Esophagus squamous epithelium (tissue), 5 donors: ENCODE measurements at regions of chr14 and their contacts with region 1.

Region 1: GRCh38 chr14:76386915-76387782 is 11.2 kb downstream of the ESRRB start:
- DNase-seq: no peak
- H3K4me3 ChIP-seq: no peak overlapping the region
- H3K27ac ChIP-seq: no peak overlapping the region
- H3K4me1 ChIP-seq: no peaks in the 10 kb centered on the region
- H3K27me3 ChIP-seq: peaks cover 0 to 74% (median 1%) of the 10 kb centered on the region in 4 donors
- CTCF ChIP-seq: peak in 5 of 6 experiments; percentile 61 to 93 (median 83)
- POLR2A ChIP-seq: no peak

Region 2: DNA sequence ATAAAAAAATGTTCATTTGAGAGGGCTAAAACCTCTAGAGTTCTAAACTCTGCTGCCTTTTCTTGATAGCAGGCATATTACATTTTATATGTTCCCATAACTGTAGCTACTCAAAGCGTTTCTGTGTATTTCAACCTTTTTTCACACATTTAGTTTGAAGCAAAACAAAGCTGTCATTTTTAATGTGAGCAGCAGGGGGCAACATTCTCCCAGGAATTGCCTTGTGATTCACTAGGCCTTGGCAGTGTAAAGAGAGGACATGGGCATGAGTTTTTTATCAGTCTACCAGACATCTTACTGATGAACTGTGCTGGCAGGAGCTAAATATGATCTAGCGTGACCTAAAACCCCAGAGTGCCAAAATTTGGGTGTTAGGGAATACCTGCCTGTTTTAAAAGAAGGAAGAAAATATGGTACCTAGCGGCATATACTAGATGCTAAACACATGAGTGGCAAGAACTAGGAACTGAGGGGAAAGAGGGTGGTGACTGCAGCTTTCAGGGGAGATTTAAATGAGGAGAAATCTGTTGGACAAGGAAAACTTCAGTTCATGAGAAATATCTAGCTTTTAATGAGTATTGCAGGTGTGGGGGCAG is 336.3 kb before region 1 on chr14:
- intact Hi-C with region 1: loop called (anchors 10 kb)
- DNase-seq: no peak
- H3K4me3 ChIP-seq: no peak overlapping the region
- H3K27ac ChIP-seq: no peak overlapping the region
- H3K4me1 ChIP-seq: no peaks in the 10 kb centered on the region
- H3K27me3 ChIP-seq: no peaks in the 10 kb centered on the region
- CTCF ChIP-seq: peak; percentile 55 to 83 (median 76)
- POLR2A ChIP-seq: no peak

Region 3: GRCh38 chr14:76761136-76761959 is 374.2 kb after region 1 on chr14 and contains the start of gene VASH1:
- intact Hi-C with region 1: no loop called
- DNase-seq: no peak
- H3K4me3 ChIP-seq: peak within 1 kb of the TSS; percentile 50 to 84 (median 63)
- H3K27ac ChIP-seq: peak within 1 kb of the TSS; percentile 52 to 89 (median 70)
- H3K4me1 ChIP-seq: peaks cover 0 to 53% (median 27%) of the 10 kb centered on the region in 3 donors
- H3K27me3 ChIP-seq: peaks cover 0 to 38% (median 0%) of the 10 kb centered on the region in 4 donors
- CTCF ChIP-seq: no peak
- POLR2A ChIP-seq: peak in 2 of 4 donors; percentile 35 to 38
- total RNA-seq, gene VASH1: 1.3 to 5.7 (median 3.0) TPM